ENCODE measurements at regions of chr11 and their contacts with region 1.

Region 1: DNA sequence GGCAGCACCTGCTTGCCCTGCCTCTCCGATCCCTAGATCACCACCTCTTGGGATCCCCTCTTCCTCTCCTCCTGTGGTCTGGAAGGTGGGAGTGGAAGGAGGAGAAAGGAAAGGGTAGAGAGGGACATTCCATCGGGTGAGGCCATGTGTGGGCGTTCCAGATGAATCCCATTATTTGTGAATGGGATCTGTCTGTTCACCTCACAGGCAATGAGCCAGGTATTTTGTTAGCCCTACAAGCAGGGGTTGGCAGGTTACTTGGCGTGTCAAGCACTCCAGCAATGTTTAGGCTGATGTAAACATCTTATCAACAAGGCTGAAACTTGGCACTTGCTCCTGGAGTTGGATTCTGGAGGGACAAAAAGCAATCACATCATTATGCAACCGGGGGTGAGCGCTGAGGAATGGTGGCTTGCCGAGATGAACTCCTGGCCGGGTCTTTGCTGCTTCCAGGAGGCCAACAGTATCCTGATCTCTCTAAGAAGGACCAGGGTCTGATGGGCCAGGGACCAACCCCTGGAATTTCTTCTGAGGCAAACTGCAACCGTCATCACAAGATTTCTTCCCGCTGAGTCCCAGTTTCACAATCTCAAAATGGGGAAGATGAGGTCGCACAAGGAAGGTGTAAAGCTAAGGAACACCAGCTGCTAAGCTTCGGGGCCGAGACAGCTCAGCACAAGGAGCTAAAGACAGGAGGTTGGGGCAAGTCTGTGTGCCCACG is 7.8 kb downstream of the ADAMTS8 start:
- DNase-seq: no peak
- ATAC-seq: peak; percentile 26

Region 2: GRCh38 chr11:130213143-130213978 is 207.3 kb before region 1 on chr11:
- intact Hi-C with region 1: loop called (anchors 5 kb)
- DNase-seq: peak; percentile 83
- ATAC-seq: peak; percentile 90

Region 3: GRCh38 chr11:130847517-130847916 is 426.9 kb after region 1 on chr11:
- intact Hi-C with region 1: no loop called
- DNase-seq: no peak
- ATAC-seq: no peak

Measured in Right ventricle myocardium superior (tissue), 1 donor.